B cell (primary cell): ENCODE measurements at regions of chr16 and their contacts with region 1.

Region 1: GRCh38 chr16:47492428-47493377 is 31.6 kb downstream of the PHKB start:
- DNase-seq: peak; percentile 72
- ATAC-seq: peak; percentile 85
- H3K4me3 ChIP-seq: peak overlapping the region; percentile 19 to 71 (median 37)
- H3K4me3 Mint-ChIP-seq: peak overlapping the region; percentile 96
- H3K27ac ChIP-seq: peak overlapping the region; percentile 81 to 85
- H3K27ac Mint-ChIP-seq: peak overlapping the region; percentile 98
- H3K4me1 ChIP-seq: peaks cover 37 to 40% of the 10 kb centered on the region in 2 donors
- H3K4me1 Mint-ChIP-seq: peaks cover 55% of the 10 kb centered on the region
- H3K27me3 ChIP-seq: no peaks in the 10 kb centered on the region
- H3K27me3 Mint-ChIP-seq: no peaks in the 10 kb centered on the region
- CTCF ChIP-seq: no peak

Region 2: DNA sequence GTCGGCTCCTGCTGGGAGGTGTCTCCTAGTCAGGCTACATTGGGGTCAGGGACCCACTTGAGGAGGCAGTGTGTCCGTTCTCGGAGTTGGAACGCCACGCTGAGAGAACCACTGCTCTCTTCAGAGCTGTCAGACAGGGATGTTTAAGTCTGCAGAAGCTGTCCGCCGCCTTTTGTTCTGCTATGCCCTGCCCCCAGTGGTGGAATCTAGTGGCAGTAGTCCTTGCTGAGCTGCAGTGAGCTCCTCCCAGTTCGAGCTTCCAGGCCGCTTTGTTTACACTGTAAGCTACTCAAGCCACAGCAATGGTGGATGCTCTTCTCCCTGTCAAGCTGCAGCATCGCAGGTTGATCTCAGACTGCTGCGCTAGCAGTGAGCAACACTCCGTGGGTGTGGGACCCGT is 67.9 kb before region 1 on chr16:
- CTCF ChIA-PET with region 1: no interaction called
- POLR2A ChIA-PET with region 1: no interaction called
- intact Hi-C with region 1: no loop called
- DNase-seq: no peak
- ATAC-seq: no peak
- H3K4me3 ChIP-seq: no peak overlapping the region
- H3K4me3 Mint-ChIP-seq: no peak overlapping the region
- H3K27ac ChIP-seq: no peak overlapping the region
- H3K27ac Mint-ChIP-seq: no peak overlapping the region
- H3K4me1 ChIP-seq: no peaks in the 10 kb centered on the region
- H3K4me1 Mint-ChIP-seq: no peaks in the 10 kb centered on the region
- H3K27me3 ChIP-seq: no peaks in the 10 kb centered on the region
- H3K27me3 Mint-ChIP-seq: no peaks in the 10 kb centered on the region
- CTCF ChIP-seq: no peak

Region 3: GRCh38 chr16:47481698-47482374 is 10.9 kb before region 1 on chr16:
- CTCF ChIA-PET with region 1: interaction called, 29 read pairs
- POLR2A ChIA-PET with region 1: interaction called, 22 read pairs
- intact Hi-C with region 1: loop called (anchors 1 kb)
- DNase-seq: no peak
- ATAC-seq: peak; percentile 89
- H3K4me3 ChIP-seq: no peak overlapping the region
- H3K4me3 Mint-ChIP-seq: peak overlapping the region; percentile 69
- H3K27ac ChIP-seq: peak overlapping the region in 1 of 2 donors; percentile 52
- H3K27ac Mint-ChIP-seq: peak overlapping the region; percentile 89
- H3K4me1 ChIP-seq: peaks cover 17 to 23% of the 10 kb centered on the region in 2 donors
- H3K4me1 Mint-ChIP-seq: peaks cover 54% of the 10 kb centered on the region
- H3K27me3 ChIP-seq: no peaks in the 10 kb centered on the region
- H3K27me3 Mint-ChIP-seq: no peaks in the 10 kb centered on the region
- CTCF ChIP-seq: no peak

Region 4: DNA sequence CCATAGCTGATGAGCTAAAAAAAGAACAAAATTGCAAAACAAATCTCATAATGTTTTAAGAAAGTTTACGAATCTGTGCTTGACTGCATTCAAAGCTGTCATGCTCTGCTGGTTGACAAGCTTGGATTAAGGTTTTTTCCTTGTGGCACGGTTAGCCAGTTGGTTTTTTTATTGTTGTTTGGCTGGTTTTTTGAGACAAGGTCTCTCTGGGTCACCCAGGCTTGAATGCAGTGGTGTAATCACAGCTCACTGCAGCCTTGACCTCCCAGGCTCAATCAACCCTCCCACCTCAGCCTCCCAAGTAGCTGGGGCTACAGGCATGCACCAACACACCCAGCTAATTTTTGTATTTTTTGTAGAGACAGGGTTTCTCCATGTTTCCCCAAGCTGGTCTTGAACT is 14.1 kb after region 1 on chr16:
- CTCF ChIA-PET with region 1: interaction called, 6 read pairs
- POLR2A ChIA-PET with region 1: interaction called, 4 read pairs
- intact Hi-C with region 1: loop called (anchors 2 kb)
- DNase-seq: no peak
- ATAC-seq: no peak
- H3K4me3 ChIP-seq: no peak overlapping the region
- H3K4me3 Mint-ChIP-seq: peak overlapping the region; percentile 52
- H3K27ac ChIP-seq: peak overlapping the region in 1 of 2 donors; percentile 47
- H3K27ac Mint-ChIP-seq: peak overlapping the region; percentile 80
- H3K4me1 ChIP-seq: peaks cover 8 to 9% of the 10 kb centered on the region in 2 donors
- H3K4me1 Mint-ChIP-seq: peaks cover 17% of the 10 kb centered on the region
- H3K27me3 ChIP-seq: no peaks in the 10 kb centered on the region
- H3K27me3 Mint-ChIP-seq: no peaks in the 10 kb centered on the region
- CTCF ChIP-seq: no peak

Region 5: GRCh38 chr16:47523342-47524006 is 30.8 kb after region 1 on chr16:
- CTCF ChIA-PET with region 1: no interaction called
- POLR2A ChIA-PET with region 1: no interaction called
- intact Hi-C with region 1: loop called (anchors 2 kb)
- DNase-seq: peak; percentile 69
- ATAC-seq: peak; percentile 98
- H3K4me3 ChIP-seq: no peak overlapping the region
- H3K4me3 Mint-ChIP-seq: peak overlapping the region; percentile 29
- H3K27ac ChIP-seq: peak overlapping the region; percentile 7 to 60
- H3K27ac Mint-ChIP-seq: peak overlapping the region; percentile 51
- H3K4me1 ChIP-seq: peaks cover 12 to 15% of the 10 kb centered on the region in 2 donors
- H3K4me1 Mint-ChIP-seq: peaks cover 14% of the 10 kb centered on the region
- H3K27me3 ChIP-seq: no peaks in the 10 kb centered on the region
- H3K27me3 Mint-ChIP-seq: no peaks in the 10 kb centered on the region
- CTCF ChIP-seq: no peak

Region 6: DNA sequence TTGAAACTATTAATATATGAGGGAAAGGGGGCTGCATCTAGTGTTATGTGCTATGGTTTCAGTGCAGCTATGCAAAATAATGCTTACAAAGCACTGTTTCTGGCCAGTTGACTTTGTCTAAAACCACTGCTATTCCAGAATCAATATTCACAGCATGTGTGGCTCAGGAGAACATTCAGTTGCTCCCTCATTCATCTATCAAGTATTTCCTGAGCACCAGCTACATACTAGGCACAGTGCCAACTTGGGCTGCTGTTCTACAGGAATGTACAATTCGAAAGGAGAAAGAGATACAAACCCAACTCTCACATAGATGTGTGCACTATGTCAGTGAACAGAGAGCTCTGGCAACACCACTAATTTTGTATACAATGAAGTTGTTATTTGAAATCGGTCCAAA is 151.5 kb after region 1 on chr16:
- CTCF ChIA-PET with region 1: no interaction called
- POLR2A ChIA-PET with region 1: no interaction called
- intact Hi-C with region 1: no loop called
- DNase-seq: no peak
- ATAC-seq: no peak
- H3K4me3 ChIP-seq: no peak overlapping the region
- H3K4me3 Mint-ChIP-seq: no peak overlapping the region
- H3K27ac ChIP-seq: no peak overlapping the region
- H3K27ac Mint-ChIP-seq: no peak overlapping the region
- H3K4me1 ChIP-seq: no peaks in the 10 kb centered on the region
- H3K4me1 Mint-ChIP-seq: no peaks in the 10 kb centered on the region
- H3K27me3 ChIP-seq: no peaks in the 10 kb centered on the region
- H3K27me3 Mint-ChIP-seq: no peaks in the 10 kb centered on the region
- CTCF ChIP-seq: no peak